Prostate gland (tissue), 2 donors: ENCODE measurements at regions of chr9 and their contacts with region 1.

Region 1: GRCh38 chr9:72592502-72593403 is 71.3 kb downstream of the TMC1 start:
- DNase-seq: peak; percentile 62
- H3K4me3 ChIP-seq: no peak overlapping the region
- H3K27ac ChIP-seq: no peak overlapping the region
- H3K4me1 ChIP-seq: no peaks in the 10 kb centered on the region
- H3K27me3 ChIP-seq: no peaks in the 10 kb centered on the region
- CTCF ChIP-seq: peak; percentile 85 to 99 (median 93)
- POLR2A ChIP-seq: no peak

Region 2: DNA sequence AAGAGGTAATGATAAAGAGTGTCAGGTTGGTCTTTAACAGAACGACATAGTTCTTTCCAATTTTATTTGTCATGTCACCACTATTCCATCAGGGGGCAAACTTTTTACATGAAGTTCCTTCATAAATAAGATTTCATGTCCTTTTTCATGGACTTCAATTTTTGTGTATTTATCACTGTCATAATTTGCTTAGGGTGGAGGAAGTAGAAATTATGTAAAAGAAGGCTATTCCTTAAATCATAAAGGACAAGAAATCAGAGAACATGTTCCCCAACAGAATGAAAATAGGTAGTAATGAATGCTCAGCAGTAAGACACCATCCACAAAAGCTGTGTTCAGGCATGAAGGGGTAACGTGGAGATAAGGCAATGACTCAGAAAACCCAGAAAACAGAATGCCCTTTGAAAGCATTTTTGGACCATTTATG is 300.5 kb before region 1 on chr9:
- intact Hi-C with region 1: loop called (anchors 5 kb)
- DNase-seq: no peak
- H3K4me3 ChIP-seq: no peak overlapping the region
- H3K27ac ChIP-seq: no peak overlapping the region
- H3K4me1 ChIP-seq: no peaks in the 10 kb centered on the region
- H3K27me3 ChIP-seq: no peaks in the 10 kb centered on the region
- CTCF ChIP-seq: peak in 3 of 4 experiments; percentile 69 to 81 (median 70)
- POLR2A ChIP-seq: no peak

Region 3: GRCh38 chr9:72827950-72828731 is 235.4 kb after region 1 on chr9:
- intact Hi-C with region 1: no loop called
- DNase-seq: no peak
- H3K4me3 ChIP-seq: no peak overlapping the region
- H3K27ac ChIP-seq: no peak overlapping the region
- H3K4me1 ChIP-seq: no peaks in the 10 kb centered on the region
- H3K27me3 ChIP-seq: no peaks in the 10 kb centered on the region
- CTCF ChIP-seq: no peak
- POLR2A ChIP-seq: no peak